ENCODE measurements at regions of chr22 and their contacts with region 1.

Region 1: GRCh38 chr22:25100948-25101347 is 98.7 kb upstream of the CRYBB3 start:
- DNase-seq: no peak
- H3K4me3 ChIP-seq: no peak overlapping the region
- H3K27ac ChIP-seq: no peak overlapping the region
- H3K4me1 ChIP-seq: no peaks in the 10 kb centered on the region
- H3K27me3 ChIP-seq: no peaks in the 10 kb centered on the region
- CTCF ChIP-seq: no peak
- EP300 ChIP-seq: no peak
- POLR2A ChIP-seq: no peak

Region 2: DNA sequence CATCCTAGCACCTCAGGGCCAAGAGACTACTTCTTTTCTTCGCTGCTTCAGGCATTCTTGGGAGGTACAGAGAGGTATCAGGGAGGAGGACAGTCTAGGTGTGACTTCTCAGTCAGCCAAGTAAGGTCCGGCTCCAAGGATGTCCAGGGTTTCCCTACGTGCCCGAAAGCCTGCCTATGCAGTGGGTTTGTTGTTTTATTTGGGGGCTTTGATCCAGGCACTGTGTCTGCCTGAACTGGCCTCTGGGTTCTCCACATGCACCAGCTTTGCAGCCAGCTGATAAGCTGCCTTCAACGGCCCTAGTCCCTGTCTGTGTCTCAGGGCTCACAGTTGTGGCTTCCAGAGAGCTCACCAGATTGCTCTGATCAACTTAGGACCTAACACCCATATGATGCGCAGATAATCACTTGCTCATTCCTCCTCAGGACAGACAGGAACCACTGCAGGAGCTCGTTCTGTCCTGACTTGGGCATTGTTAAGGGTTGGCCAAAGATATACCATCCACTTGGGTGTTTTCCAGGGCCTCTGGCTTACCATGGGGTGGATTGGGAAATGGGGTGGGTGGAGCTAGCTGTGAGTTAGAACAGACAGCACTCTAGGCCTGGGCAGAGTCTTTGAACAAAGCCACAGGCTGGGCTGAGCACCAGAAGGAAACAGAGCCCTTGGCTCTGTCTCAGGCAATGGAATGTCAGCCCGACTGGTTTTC is 53.2 kb after region 1 on chr22:
- intact Hi-C with region 1: loop called (anchors 10 kb)
- DNase-seq: peak; percentile 78 to 89
- H3K4me3 ChIP-seq: no peak overlapping the region
- H3K27ac ChIP-seq: peak overlapping the region; percentile 65 to 80 (median 76)
- H3K4me1 ChIP-seq: peaks cover 16 to 30% (median 22%) of the 10 kb centered on the region in 4 donors
- H3K27me3 ChIP-seq: no peaks in the 10 kb centered on the region
- CTCF ChIP-seq: no peak
- EP300 ChIP-seq: no peak
- POLR2A ChIP-seq: no peak